ENCODE measurements at regions of chr15 and their contacts with region 1.

Region 1: GRCh38 chr15:50134520-50135024 is 15.5 kb upstream of the ATP8B4 start:
- DNase-seq: no peak
- ATAC-seq: peak; percentile 88
- H3K4me3 ChIP-seq: no peak overlapping the region
- H3K4me3 Mint-ChIP-seq: peak overlapping the region in 1 of 10 donors; percentile 59
- H3K27ac ChIP-seq: no peak overlapping the region
- H3K27ac Mint-ChIP-seq: peak overlapping the region in 1 of 9 donors; percentile 84
- H3K4me1 ChIP-seq: no peaks in the 10 kb centered on the region
- H3K4me1 Mint-ChIP-seq: peaks cover 0 to 44% (median 0%) of the 10 kb centered on the region in 7 donors
- H3K27me3 ChIP-seq: no peaks in the 10 kb centered on the region
- H3K27me3 Mint-ChIP-seq: peaks cover 0 to 23% (median 10%) of the 10 kb centered on the region in 5 donors

Region 2: GRCh38 chr15:50003786-50004334 is 130.7 kb before region 1 on chr15:
- CTCF ChIA-PET with region 1: no interaction called
- POLR2A ChIA-PET with region 1: no interaction called
- intact Hi-C with region 1: loop called in 1 of 2 experiments (anchors 5 kb)
- DNase-seq: peak in 7 of 9 donors; percentile 4 to 48 (median 14)
- ATAC-seq: peak; percentile 98
- H3K4me3 ChIP-seq: no peak overlapping the region
- H3K4me3 Mint-ChIP-seq: peak overlapping the region in 1 of 10 donors; percentile 29
- H3K27ac ChIP-seq: no peak overlapping the region
- H3K27ac Mint-ChIP-seq: peak overlapping the region in 2 of 9 donors; percentile 14 to 78
- H3K4me1 ChIP-seq: peaks cover 0 to 3% of the 10 kb centered on the region in 2 donors
- H3K4me1 Mint-ChIP-seq: peaks cover 0 to 16% (median 0%) of the 10 kb centered on the region in 7 donors
- H3K27me3 ChIP-seq: no peaks in the 10 kb centered on the region
- H3K27me3 Mint-ChIP-seq: peaks cover 0 to 14% (median 11%) of the 10 kb centered on the region in 5 donors

Region 3: DNA sequence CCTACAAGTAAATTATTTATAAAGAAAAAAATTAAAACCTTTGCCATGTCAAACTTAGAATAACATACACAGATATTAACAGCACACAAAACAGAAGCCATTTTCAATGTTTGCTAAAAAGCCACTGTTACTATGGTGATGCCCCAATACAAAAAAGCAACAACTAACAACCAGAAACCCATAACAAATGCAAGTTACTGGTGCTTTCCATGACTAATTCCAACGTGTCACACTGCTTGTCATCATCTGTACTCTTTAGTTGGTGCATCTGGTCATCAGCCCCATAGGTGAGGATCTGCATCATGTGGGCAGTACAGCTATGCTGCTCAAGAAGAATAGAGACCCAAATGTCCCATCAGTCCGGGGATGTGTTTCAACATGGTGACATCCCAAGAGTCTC is 68.4 kb before region 1 on chr15:
- CTCF ChIA-PET with region 1: no interaction called
- POLR2A ChIA-PET with region 1: no interaction called
- intact Hi-C with region 1: loop called in 1 of 2 experiments (anchors 1 kb)
- DNase-seq: peak in 1 of 9 donors; percentile 35
- ATAC-seq: peak; percentile 88
- H3K4me3 ChIP-seq: no peak overlapping the region
- H3K4me3 Mint-ChIP-seq: no peak overlapping the region
- H3K27ac ChIP-seq: no peak overlapping the region
- H3K27ac Mint-ChIP-seq: peak overlapping the region in 1 of 9 donors; percentile 78
- H3K4me1 ChIP-seq: no peaks in the 10 kb centered on the region
- H3K4me1 Mint-ChIP-seq: peaks cover 0 to 43% (median 0%) of the 10 kb centered on the region in 7 donors
- H3K27me3 ChIP-seq: no peaks in the 10 kb centered on the region
- H3K27me3 Mint-ChIP-seq: peaks cover 0 to 28% (median 0%) of the 10 kb centered on the region in 5 donors

Region 4: GRCh38 chr15:50084932-50085331 is 49.6 kb before region 1 on chr15:
- CTCF ChIA-PET with region 1: no interaction called
- POLR2A ChIA-PET with region 1: no interaction called
- intact Hi-C with region 1: loop called in 1 of 2 experiments (anchors 5 kb)
- DNase-seq: no peak
- ATAC-seq: no peak
- H3K4me3 ChIP-seq: no peak overlapping the region
- H3K4me3 Mint-ChIP-seq: no peak overlapping the region
- H3K27ac ChIP-seq: no peak overlapping the region
- H3K27ac Mint-ChIP-seq: no peak overlapping the region
- H3K4me1 ChIP-seq: no peaks in the 10 kb centered on the region
- H3K4me1 Mint-ChIP-seq: peaks cover 0 to 26% (median 0%) of the 10 kb centered on the region in 7 donors
- H3K27me3 ChIP-seq: no peaks in the 10 kb centered on the region
- H3K27me3 Mint-ChIP-seq: peaks cover 0 to 10% (median 3%) of the 10 kb centered on the region in 5 donors

Region 5: GRCh38 chr15:50107591-50108408 is 26.8 kb before region 1 on chr15:
- CTCF ChIA-PET with region 1: no interaction called
- POLR2A ChIA-PET with region 1: no interaction called
- intact Hi-C with region 1: loop called in 1 of 2 experiments (anchors 1 kb)
- DNase-seq: peak in 1 of 9 donors; percentile 42
- ATAC-seq: peak; percentile 90
- H3K4me3 ChIP-seq: no peak overlapping the region
- H3K4me3 Mint-ChIP-seq: peak overlapping the region in 2 of 10 donors; percentile 33 to 80
- H3K27ac ChIP-seq: no peak overlapping the region
- H3K27ac Mint-ChIP-seq: peak overlapping the region in 2 of 9 donors; percentile 15 to 96
- H3K4me1 ChIP-seq: peaks cover 4 to 19% of the 10 kb centered on the region in 2 donors
- H3K4me1 Mint-ChIP-seq: peaks cover 21 to 73% (median 35%) of the 10 kb centered on the region in 7 donors
- H3K27me3 ChIP-seq: no peaks in the 10 kb centered on the region
- H3K27me3 Mint-ChIP-seq: peaks cover 0 to 22% (median 0%) of the 10 kb centered on the region in 5 donors

Region 6: GRCh38 chr15:50119063-50120040 is 15.2 kb before region 1 on chr15 and contains the start of gene ATP8B4:
- CTCF ChIA-PET with region 1: no interaction called
- POLR2A ChIA-PET with region 1: no interaction called
- intact Hi-C with region 1: loop called in 1 of 2 experiments (anchors 1 kb)
- DNase-seq: no peak
- ATAC-seq: no peak
- H3K4me3 ChIP-seq: no peak within 1 kb of the TSS
- H3K4me3 Mint-ChIP-seq: peak within 1 kb of the TSS in 2 of 10 donors; percentile 73 to 82
- H3K27ac ChIP-seq: no peak within 1 kb of the TSS
- H3K27ac Mint-ChIP-seq: peak within 1 kb of the TSS in 1 of 9 donors; percentile 82
- H3K4me1 ChIP-seq: no peaks in the 10 kb centered on the region
- H3K4me1 Mint-ChIP-seq: peaks cover 0 to 36% (median 7%) of the 10 kb centered on the region in 7 donors
- H3K27me3 ChIP-seq: no peaks in the 10 kb centered on the region
- H3K27me3 Mint-ChIP-seq: peaks cover 0 to 17% (median 14%) of the 10 kb centered on the region in 5 donors
- total RNA-seq, gene ATP8B4: 0.92 to 24.3 (median 5.0) TPM

Measured in naive thymus-derived CD4-positive, alpha-beta T cell (primary cell).